ENCODE measurements at regions of chr7 and their contacts with region 1.

Region 1: DNA sequence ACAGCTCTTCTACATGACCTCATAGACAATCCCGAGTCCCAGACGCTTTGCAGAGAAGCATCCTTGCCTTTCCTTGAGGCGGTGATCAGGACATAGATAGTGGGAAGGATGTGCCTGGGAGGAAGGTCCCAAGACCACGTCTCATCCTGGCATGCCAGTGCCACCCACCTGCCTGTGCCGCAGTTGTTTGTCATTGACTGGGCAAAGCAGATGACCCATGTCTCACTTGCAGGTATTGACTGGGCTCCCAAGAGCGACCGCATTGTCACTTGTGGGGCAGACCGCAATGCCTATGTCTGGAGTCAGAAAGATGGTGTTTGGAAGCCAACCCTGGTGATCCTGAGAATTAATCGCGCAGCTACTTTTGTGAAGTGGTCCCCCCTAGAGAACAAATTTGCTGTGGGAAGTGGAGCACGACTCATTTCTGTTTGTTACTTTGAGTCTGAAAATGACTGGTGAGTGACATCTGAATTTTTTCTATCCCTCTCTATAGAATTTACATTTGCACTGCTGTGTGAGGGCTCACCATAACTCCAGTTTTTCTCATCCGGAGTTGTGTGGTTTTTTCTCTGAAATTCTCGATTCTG is 18.5 kb downstream of the ARPC1A start:
- DNase-seq: no peak
- ATAC-seq: peak; percentile 33
- H3K4me3 Mint-ChIP-seq: no peak overlapping the region
- H3K27ac Mint-ChIP-seq: peak overlapping the region; percentile 42
- H3K4me1 Mint-ChIP-seq: peaks cover 11% of the 10 kb centered on the region
- H3K27me3 Mint-ChIP-seq: no peaks in the 10 kb centered on the region

Region 2: DNA sequence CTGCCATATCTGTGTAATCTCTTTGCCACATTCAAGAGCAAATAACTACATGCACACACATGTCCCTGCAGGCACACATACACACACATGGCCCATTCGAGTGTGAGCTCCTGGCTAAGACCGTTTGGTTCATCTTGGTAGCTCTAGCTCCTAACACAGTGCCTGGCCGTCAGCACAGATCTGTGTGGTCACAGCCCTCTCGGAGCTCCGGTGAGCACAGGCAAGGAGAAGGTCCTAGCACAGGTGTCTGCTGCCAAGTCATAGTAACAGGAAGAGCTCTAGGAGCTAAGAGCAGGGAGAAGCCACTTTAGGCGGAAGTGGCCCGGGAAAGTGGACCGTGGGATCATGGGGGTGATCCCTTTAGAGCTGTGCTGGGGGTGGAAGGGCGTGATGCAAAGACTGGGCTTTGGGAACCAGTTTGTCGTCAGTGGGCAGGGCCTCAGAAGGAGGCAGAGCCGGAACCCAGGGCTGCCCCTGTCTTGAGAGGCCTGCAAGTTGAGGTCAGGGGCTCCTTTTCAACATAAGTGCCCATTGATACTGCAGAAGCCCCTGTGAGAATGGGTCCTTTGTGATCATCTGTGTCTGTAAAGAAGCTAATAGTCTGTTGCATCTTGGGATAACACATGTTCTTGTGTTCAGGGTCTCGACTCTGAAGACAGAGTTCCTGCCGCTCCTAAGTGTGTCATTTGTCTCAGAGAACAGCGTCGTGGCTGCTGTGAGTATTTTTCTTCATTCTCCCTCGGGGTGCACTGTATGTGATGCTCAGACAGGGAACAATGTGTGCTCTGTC is 13.7 kb after region 1 on chr7:
- CTCF ChIA-PET with region 1: interaction called, 3 read pairs
- POLR2A ChIA-PET with region 1: interaction called, 5 read pairs
- intact Hi-C with region 1: loop called in 1 of 2 experiments (anchors 1 kb)
- DNase-seq: no peak
- ATAC-seq: no peak
- H3K4me3 Mint-ChIP-seq: no peak overlapping the region
- H3K27ac Mint-ChIP-seq: no peak overlapping the region
- H3K4me1 Mint-ChIP-seq: no peaks in the 10 kb centered on the region
- H3K27me3 Mint-ChIP-seq: no peaks in the 10 kb centered on the region